Prostate gland (tissue), 2 donors: ENCODE measurements at regions of chr2 and their contacts with region 1.

Region 1: GRCh38 chr2:18435421-18436037 is 124.9 kb downstream of the RDH14 start:
- DNase-seq: peak; percentile 17
- H3K4me3 ChIP-seq: no peak overlapping the region
- H3K27ac ChIP-seq: no peak overlapping the region
- H3K4me1 ChIP-seq: no peaks in the 10 kb centered on the region
- H3K27me3 ChIP-seq: no peaks in the 10 kb centered on the region
- CTCF ChIP-seq: peak; percentile 40 to 65 (median 50)
- POLR2A ChIP-seq: no peak

Region 2: GRCh38 chr2:18077704-18078103 is 357.8 kb before region 1 on chr2:
- intact Hi-C with region 1: no loop called
- DNase-seq: no peak
- H3K4me3 ChIP-seq: no peak overlapping the region
- H3K27ac ChIP-seq: no peak overlapping the region
- H3K4me1 ChIP-seq: no peaks in the 10 kb centered on the region
- H3K27me3 ChIP-seq: no peaks in the 10 kb centered on the region
- CTCF ChIP-seq: no peak
- POLR2A ChIP-seq: no peak

Region 3: DNA sequence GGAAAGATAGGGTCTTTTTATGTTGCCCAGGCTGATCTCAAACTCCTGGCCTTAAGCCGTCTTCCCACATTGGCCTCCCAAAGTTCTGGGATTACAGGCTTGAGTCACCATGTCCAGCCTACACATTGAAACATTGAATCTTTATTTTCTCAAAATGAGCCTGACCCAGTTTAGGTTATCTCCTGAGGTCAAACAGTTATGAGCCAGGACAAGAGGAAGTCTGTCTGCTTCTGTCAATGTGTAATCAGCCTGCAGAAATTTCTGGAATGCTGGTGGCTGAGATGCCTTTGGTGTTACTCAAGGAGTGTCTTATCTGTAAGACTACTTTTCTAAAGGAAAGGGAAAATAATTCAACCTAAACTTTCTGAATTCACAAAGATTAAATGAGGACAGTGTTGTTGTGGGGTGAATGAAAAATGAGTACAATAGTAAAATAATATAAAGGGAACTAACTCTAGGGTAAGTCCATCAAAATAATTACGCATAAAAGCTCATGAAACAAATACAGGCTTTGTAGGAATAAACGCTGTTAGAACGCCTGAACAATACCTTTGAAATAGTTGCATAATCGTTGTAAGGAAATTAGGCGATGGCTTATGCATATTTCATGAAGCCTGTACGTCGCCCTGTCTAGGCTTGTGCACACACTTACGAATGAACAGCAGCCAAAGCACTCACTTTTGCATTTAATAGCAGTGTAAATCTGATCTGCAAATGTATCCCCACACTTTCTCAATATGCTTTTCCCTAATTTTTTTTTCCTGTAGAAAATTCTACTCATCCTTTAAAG is 135.9 kb before region 1 on chr2:
- intact Hi-C with region 1: no loop called
- DNase-seq: no peak
- H3K4me3 ChIP-seq: no peak overlapping the region
- H3K27ac ChIP-seq: no peak overlapping the region
- H3K4me1 ChIP-seq: no peaks in the 10 kb centered on the region
- H3K27me3 ChIP-seq: no peaks in the 10 kb centered on the region
- CTCF ChIP-seq: no peak
- POLR2A ChIP-seq: no peak

Region 4: DNA sequence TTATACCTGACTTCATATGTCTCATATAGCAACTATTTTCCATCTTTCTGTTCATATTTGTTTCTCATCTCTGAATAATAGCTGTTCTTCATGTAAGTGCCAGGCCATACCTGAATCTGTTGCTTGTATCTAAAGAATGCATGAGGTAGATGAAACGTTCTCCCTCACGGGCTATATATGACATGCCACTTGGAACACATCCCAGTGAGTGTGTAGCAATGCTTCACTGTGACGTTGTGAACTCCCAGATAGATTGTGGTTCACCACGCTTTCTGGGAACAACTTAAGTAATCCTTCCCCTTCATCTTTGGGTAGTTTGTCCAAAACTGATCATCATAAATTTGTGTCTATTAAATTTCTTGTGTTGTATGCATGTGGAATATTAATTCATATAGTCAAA is 64.8 kb after region 1 on chr2:
- intact Hi-C with region 1: no loop called
- DNase-seq: no peak
- H3K4me3 ChIP-seq: no peak overlapping the region
- H3K27ac ChIP-seq: no peak overlapping the region
- H3K4me1 ChIP-seq: no peaks in the 10 kb centered on the region
- H3K27me3 ChIP-seq: no peaks in the 10 kb centered on the region
- CTCF ChIP-seq: no peak
- POLR2A ChIP-seq: no peak

Region 5: DNA sequence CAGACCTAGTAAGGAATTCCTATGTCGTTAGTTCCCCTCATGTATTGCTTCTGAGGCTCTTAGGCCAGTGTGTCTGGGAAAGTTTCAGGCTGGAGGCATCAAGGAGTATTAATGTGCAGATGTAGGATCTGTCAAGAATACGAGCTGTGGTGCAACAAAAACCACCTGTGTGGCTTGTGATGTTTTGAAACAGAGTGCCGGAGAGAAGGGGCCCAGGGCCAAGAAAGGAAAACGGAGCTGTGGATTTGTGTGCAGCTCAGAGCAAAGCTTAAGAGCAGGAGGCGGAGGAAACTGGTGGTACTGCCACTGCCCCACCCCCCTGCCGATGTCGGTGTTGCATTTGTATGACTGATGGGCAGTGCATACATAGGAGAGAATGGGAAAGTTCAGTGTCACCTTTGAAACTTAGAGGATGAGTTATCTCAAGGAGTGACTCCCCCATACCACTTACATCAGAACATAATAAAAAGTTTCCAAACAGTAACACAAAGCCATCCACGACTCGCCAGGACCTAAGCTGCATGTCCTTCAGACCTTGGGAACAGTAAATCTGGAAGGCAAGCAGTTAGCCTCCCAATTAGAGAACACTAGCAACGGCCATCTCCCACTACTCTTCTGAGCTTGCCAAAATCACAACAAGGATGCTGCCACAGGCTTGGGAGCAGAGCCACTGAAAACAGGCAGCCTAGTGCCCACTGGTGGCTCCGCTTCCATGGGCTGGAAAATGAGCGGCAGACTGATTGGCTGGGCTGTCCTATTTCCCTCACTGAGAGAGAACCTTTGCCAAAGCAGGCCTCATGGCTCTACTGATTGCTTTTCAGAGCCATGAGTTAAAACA is 306.6 kb after region 1 on chr2:
- intact Hi-C with region 1: loop called (anchors 5 kb)
- DNase-seq: no peak
- H3K4me3 ChIP-seq: no peak overlapping the region
- H3K27ac ChIP-seq: no peak overlapping the region
- H3K4me1 ChIP-seq: no peaks in the 10 kb centered on the region
- H3K27me3 ChIP-seq: no peaks in the 10 kb centered on the region
- CTCF ChIP-seq: no peak
- POLR2A ChIP-seq: no peak

Region 6: GRCh38 chr2:18976168-18976961 is 540.8 kb after region 1 on chr2:
- intact Hi-C with region 1: loop called (anchors 10 kb)
- DNase-seq: no peak
- H3K4me3 ChIP-seq: peak overlapping the region in 1 of 2 donors; percentile 15
- H3K27ac ChIP-seq: peak overlapping the region; percentile 58 to 62
- H3K4me1 ChIP-seq: no peaks in the 10 kb centered on the region
- H3K27me3 ChIP-seq: no peaks in the 10 kb centered on the region
- CTCF ChIP-seq: no peak
- POLR2A ChIP-seq: no peak

Region 7: GRCh38 chr2:19235308-19235707 is 799.8 kb after region 1 on chr2:
- intact Hi-C with region 1: loop called (anchors 10 kb)
- DNase-seq: peak; percentile 58
- H3K4me3 ChIP-seq: no peak overlapping the region
- H3K27ac ChIP-seq: peak overlapping the region in 1 of 2 donors; percentile 15
- H3K4me1 ChIP-seq: no peaks in the 10 kb centered on the region
- H3K27me3 ChIP-seq: no peaks in the 10 kb centered on the region
- CTCF ChIP-seq: no peak
- POLR2A ChIP-seq: no peak

Region 8: GRCh38 chr2:19357402-19358241 is 922.1 kb after region 1 on chr2:
- intact Hi-C with region 1: loop called (anchors 2 kb)
- DNase-seq: peak; percentile 35
- H3K4me3 ChIP-seq: peak overlapping the region; percentile 47 to 61
- H3K27ac ChIP-seq: peak overlapping the region; percentile 73 to 77
- H3K4me1 ChIP-seq: no peaks in the 10 kb centered on the region
- H3K27me3 ChIP-seq: peaks cover 5% of the 10 kb centered on the region
- CTCF ChIP-seq: no peak
- POLR2A ChIP-seq: no peak

Region 9: DNA sequence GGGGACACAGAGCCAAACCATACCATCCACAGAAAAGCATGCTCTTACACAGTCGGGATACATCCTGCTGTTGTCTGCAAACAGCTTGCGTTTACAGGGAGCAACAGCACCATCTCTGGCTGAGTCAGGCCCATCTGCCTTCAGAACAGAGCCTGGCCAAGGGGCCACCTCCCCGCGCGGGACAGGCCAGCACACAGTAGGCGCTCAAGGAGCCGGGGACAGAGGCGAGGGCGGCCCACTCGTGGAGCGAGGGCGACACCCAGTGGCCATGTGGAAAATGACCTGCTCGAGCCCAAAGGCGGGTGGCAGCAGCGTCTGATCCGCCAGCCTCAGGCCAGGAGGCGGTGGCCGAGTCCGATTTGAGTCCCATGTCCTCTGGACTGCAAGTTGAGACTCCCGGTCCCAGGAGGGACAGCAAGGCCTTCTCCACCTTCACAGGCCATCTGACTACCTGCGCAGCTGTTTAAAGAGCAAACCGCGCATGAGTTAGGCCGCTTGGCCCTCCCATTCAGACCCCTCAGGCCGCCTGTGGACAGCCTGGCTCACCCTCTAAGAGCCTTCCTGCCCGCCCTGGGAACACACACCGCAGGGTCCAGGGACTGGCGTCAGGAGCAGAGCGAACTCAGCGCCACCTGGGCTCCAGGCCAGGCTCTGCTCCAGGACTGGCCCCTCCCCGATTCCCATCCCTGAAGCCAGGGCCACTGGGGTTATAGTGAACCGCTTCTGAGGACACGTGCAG is 1427.9 kb after region 1 on chr2:
- intact Hi-C with region 1: loop called (anchors 10 kb)
- DNase-seq: peak; percentile 44
- H3K4me3 ChIP-seq: no peak overlapping the region
- H3K27ac ChIP-seq: no peak overlapping the region
- H3K4me1 ChIP-seq: no peaks in the 10 kb centered on the region
- H3K27me3 ChIP-seq: no peaks in the 10 kb centered on the region
- CTCF ChIP-seq: peak; percentile 79 to 96 (median 92)
- POLR2A ChIP-seq: no peak